HepG2 (cell line): ENCODE measurements at regions of chr7 and their contacts with region 1.

Region 1: GRCh38 chr7:104914421-104914820 is 99.6 kb upstream of the KMT2E start:
- DNase-seq: no peak
- ATAC-seq: no peak
- H3K4me3 ChIP-seq: no peak overlapping the region
- H3K27ac ChIP-seq: no peak overlapping the region
- H3K4me1 ChIP-seq: no peaks in the 10 kb centered on the region
- H3K27me3 ChIP-seq: 0 out of 5 replicates have a peak, but pooled peaks cover 0 to 2% of the 10 kb centered on the region in 2 experiments
- CTCF ChIP-seq: no peak
- EP300 ChIP-seq: no peak
- POLR2A ChIP-seq: no peak
- RAD21 ChIP-seq: no peak

Region 2: DNA sequence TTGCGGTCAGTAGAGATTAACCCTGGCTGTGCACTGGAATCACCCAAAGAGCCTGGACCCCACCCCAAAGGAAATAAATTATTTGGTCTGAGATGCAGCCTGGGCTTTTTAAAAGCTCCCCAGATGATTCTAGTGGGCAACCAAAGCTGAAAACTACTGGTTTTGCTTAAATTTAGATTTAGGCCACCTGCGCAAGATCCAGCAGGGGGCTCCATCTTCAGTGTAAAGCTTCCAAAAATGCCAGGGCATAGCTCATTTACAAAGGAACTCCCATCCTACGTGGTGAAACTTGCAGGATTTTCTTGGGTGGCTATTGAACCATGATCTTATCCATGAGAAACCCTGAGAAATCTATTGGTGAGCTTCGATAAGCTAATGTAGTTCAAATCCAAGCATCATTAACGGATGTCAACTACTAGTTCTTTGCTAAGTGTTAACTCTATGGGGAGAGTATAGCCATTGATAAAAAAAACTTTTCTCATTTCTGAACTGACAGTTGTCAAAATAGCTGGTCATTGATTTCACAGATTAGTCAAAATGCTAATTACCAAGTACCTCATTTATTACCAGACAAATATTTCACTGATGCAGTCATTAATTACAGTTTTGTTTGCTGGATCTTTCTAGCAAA is 270.7 kb before region 1 on chr7:
- CTCF ChIA-PET with region 1: no interaction called
- POLR2A ChIA-PET with region 1: no interaction called
- in situ Hi-C with region 1: loop called (anchors 10 kb)
- intact Hi-C with region 1: loop called (anchors 5 kb)
- DNase-seq: peak; percentile 7
- ATAC-seq: peak; percentile 31; the same call in 1 of the 3 replicates
- H3K4me3 ChIP-seq: no peak overlapping the region
- H3K27ac ChIP-seq: no peak overlapping the region
- H3K4me1 ChIP-seq: no peaks in the 10 kb centered on the region
- H3K27me3 ChIP-seq: peaks cover 0 to 7% of the 10 kb centered on the region in 2 experiments; a peak in 2 of 5 replicates
- CTCF ChIP-seq: peak; percentile 45
- EP300 ChIP-seq: no peak
- POLR2A ChIP-seq: no peak
- RAD21 ChIP-seq: 0 out of 2 replicates have a peak, but pooled peaks have one; percentile 21

Region 3: GRCh38 chr7:104656467-104656866 is 258.0 kb before region 1 on chr7:
- CTCF ChIA-PET with region 1: no interaction called
- POLR2A ChIA-PET with region 1: no interaction called
- in situ Hi-C with region 1: no loop called
- intact Hi-C with region 1: no loop called
- DNase-seq: no peak
- ATAC-seq: no peak
- H3K4me3 ChIP-seq: no peak overlapping the region
- H3K27ac ChIP-seq: no peak overlapping the region
- H3K4me1 ChIP-seq: no peaks in the 10 kb centered on the region
- H3K27me3 ChIP-seq: no peaks in the 10 kb centered on the region; a peak in 1 of 5 replicates
- CTCF ChIP-seq: no peak
- EP300 ChIP-seq: no peak
- POLR2A ChIP-seq: no peak
- RAD21 ChIP-seq: no peak

Region 4: DNA sequence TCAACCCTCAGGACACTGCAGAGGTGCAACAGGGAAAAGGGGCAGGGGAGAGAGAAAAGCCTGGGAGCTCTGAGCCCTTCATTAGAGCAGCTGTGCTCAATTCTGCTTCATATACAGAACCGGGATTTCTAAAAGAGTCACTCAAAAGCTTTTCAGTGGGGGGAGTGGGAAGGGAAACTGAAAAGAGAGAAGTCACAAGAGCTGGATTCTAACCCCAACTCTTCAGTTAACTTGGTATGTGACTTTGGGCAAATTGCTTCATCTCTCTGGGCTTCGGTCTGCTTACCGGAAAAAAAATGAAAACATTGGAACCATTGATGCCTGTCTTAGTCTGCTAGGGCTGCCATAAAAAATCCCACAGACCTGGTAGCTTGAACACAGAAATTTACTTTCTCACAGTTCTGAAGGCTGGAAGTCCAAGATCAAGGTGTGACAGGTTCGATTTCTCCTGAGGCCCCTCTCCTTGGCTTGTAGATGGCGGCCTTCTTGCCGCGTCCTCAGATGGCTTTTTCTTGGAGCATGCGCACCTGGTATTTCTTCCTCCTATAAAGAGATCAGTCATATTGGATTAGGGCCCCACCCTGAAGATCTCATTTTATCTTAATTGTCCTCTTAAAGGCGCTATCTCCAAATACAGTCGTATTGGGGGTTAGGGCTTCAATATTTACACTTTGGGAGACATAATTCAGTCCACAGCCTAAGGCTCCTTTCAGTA is 18.7 kb before region 1 on chr7:
- CTCF ChIA-PET with region 1: no interaction called
- POLR2A ChIA-PET with region 1: no interaction called
- in situ Hi-C with region 1: no loop called
- intact Hi-C with region 1: no loop called
- DNase-seq: no peak
- ATAC-seq: no peak
- H3K4me3 ChIP-seq: no peak overlapping the region
- H3K27ac ChIP-seq: no peak overlapping the region
- H3K4me1 ChIP-seq: peaks cover 9% of the 10 kb centered on the region
- H3K27me3 ChIP-seq: no peaks in the 10 kb centered on the region
- CTCF ChIP-seq: no peak
- EP300 ChIP-seq: no peak
- POLR2A ChIP-seq: no peak
- RAD21 ChIP-seq: no peak